ENCODE measurements at regions of chr14 and their contacts with region 1.

Region 1: GRCh38 chr14:73795972-73796371 is 55.7 kb upstream of the PTGR2 start:
- DNase-seq: peak; percentile 80
- H3K4me3 Mint-ChIP-seq: no peak overlapping the region
- H3K27ac Mint-ChIP-seq: peak overlapping the region; percentile 64
- H3K4me1 Mint-ChIP-seq: peaks cover 21% of the 10 kb centered on the region
- H3K27me3 Mint-ChIP-seq: no peaks in the 10 kb centered on the region
- CTCF ChIP-seq: no peak

Region 2: DNA sequence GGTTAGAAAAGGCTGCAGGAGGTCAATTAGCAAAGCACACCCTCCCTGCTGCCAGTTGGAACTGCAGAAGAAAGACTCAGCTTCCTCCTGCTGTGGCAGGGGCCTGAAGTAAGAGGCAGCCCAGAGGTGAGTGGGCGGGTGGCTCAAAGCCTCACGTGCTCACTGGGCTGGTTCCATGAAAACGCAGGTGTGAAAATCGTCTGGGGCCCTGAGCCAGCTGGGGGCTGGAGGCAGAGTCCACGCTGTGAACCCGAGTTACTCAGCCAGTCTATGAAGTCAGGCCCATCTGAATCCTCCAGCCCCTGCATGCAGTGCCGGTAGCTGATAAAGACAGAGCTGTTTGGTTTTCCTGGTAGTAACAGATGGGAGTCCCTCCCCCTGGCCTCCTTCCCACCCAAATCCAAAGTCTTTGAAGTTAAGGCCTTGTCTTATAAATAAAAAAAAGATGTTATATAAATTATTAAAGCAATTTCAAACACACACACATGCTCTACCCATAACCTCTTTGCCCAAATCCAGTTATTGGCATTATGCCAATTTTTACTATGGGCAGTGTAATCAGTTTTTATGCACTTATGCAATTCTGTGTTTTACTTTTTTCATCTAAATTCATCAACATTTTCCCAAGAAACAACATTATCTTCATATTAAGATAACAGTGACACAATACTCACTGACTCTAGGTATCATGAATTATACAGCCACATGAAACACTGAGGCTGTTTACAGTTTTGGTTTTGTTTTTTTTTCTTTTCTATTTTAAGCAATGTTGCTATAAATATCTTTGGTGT is 23.9 kb before region 1 on chr14:
- CTCF ChIA-PET with region 1: interaction called, 4 read pairs
- POLR2A ChIA-PET with region 1: interaction called, 12 read pairs
- intact Hi-C with region 1: no loop called
- DNase-seq: peak; percentile 83
- H3K4me3 Mint-ChIP-seq: no peak overlapping the region
- H3K27ac Mint-ChIP-seq: peak overlapping the region; percentile 51
- H3K4me1 Mint-ChIP-seq: peaks cover 38% of the 10 kb centered on the region
- H3K27me3 Mint-ChIP-seq: no peaks in the 10 kb centered on the region
- CTCF ChIP-seq: no peak